Left ventricle myocardium superior (tissue), 1 donor: ENCODE measurements at regions of chr4 and their contacts with region 1.

Region 1: GRCh38 chr4:184384810-184385557 is 89.4 kb downstream of the IRF2 start:
- DNase-seq: no peak
- ATAC-seq: no peak

Region 2: GRCh38 chr4:183996868-183997267 is 388.1 kb before region 1 on chr4:
- intact Hi-C with region 1: no loop called
- DNase-seq: no peak
- ATAC-seq: peak; percentile 55

Region 3: DNA sequence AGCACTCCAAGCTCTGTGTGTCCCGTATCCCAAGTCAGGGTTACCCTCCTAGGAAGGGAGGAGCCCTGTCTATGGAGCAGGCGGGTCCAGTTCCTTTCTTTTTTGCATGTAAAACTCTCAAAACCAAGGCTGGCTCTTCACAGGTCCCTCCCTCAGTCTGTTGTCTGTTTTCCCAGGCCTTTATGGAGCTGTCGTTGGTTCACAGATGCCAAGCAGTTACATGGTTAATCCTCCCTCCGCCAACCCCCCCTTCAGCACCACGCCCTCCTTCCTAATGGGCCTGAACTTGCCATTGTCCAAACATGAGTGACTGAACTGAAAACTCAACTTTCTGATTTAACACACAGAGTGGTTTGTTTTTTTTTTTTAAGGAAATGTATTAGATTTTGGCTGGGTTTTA is 331.6 kb before region 1 on chr4:
- intact Hi-C with region 1: no loop called
- DNase-seq: no peak
- ATAC-seq: no peak

Region 4: GRCh38 chr4:184313702-184314659 is 71.0 kb before region 1 on chr4:
- intact Hi-C with region 1: no loop called
- DNase-seq: no peak
- ATAC-seq: no peak

Region 5: GRCh38 chr4:184343502-184344177 is 41.3 kb before region 1 on chr4:
- intact Hi-C with region 1: loop called (anchors 5 kb)
- DNase-seq: peak; percentile 69
- ATAC-seq: peak; percentile 81